Thyroid gland (tissue), 4 donors: ENCODE measurements at regions of chr16 and their contacts with region 1.

Region 1: DNA sequence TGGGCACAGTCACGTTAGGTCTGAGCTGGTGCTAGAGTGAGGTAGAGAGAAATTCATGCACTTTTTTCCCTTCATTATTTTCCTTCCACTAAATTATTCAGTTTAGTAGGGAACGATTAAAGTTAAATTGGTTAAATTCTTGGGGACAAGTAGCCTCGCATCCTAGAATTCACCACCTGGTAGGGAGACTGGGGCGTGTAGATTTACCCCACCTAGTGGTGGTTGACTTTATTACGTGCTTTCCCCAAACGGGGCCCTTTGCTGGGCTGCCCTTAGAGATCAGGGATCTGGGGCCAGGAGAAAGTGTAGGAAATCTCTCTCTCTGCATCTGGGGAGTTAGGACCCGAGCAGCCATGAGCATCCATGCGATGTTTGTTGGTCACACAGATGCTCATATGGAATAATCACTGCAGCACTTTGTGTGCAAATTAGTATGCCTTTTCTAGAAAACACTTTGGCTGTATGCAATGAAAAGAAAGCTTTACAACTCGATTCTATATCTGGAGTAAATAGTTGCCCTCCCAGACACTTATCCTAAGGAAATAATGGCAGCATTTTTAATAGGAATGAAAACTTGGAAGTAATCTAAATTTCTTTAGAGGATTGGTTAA is 107.0 kb downstream of the PLCG2 start:
- DNase-seq: no peak
- H3K4me3 ChIP-seq: no peak overlapping the region
- H3K27ac ChIP-seq: no peak overlapping the region
- H3K4me1 ChIP-seq: no peaks in the 10 kb centered on the region
- H3K27me3 ChIP-seq: no peaks in the 10 kb centered on the region
- CTCF ChIP-seq: peak in 3 of 6 experiments; percentile 15 to 50 (median 24)
- POLR2A ChIP-seq: no peak

Region 2: DNA sequence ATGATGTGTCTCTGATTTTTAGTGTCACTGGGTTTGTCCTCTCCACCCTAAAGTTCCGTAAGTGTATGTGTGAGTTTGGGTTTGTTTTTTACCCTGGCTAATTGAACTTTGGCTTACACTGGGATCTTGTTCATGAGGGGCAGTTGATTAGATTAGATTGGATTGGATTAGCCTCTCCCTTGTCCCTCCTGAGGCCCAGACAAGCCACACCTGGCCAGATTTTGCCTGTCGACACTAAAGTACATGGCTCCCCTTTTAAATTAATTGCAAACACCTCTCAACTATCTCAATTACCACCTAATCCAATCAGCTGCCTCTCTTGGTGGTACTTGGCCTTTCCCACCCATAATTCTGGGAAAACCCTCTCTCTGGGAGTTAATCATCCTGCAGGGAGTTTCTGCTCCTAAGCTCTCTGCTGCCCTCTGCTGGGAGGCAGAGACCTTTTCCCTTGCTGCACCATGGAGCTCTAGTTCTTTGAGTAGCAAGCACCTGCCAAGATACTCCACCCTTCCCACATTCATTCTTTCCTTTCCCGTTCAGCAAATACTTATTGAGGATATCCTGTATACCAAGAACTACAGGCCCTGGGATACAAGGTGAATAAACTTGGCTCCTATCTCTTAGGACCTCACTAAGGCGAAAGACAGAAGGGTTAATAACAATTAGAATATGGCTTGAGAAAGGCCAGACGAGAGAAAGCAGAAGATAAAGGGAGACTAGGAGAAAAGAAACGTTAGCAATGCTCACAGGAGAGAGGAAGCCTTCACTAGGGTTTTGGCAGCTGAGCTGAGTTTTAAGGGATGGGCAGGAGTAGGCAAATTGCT is 343.9 kb after region 1 on chr16:
- intact Hi-C with region 1: loop called (anchors 5 kb)
- DNase-seq: peak; percentile 54 to 71
- H3K4me3 ChIP-seq: no peak overlapping the region
- H3K27ac ChIP-seq: no peak overlapping the region
- H3K4me1 ChIP-seq: no peaks in the 10 kb centered on the region
- H3K27me3 ChIP-seq: no peaks in the 10 kb centered on the region
- CTCF ChIP-seq: peak; percentile 60 to 81 (median 62)
- POLR2A ChIP-seq: no peak